AG04449 (cell line): ENCODE measurements at regions of chr1 and their contacts with region 1.

Region 1: DNA sequence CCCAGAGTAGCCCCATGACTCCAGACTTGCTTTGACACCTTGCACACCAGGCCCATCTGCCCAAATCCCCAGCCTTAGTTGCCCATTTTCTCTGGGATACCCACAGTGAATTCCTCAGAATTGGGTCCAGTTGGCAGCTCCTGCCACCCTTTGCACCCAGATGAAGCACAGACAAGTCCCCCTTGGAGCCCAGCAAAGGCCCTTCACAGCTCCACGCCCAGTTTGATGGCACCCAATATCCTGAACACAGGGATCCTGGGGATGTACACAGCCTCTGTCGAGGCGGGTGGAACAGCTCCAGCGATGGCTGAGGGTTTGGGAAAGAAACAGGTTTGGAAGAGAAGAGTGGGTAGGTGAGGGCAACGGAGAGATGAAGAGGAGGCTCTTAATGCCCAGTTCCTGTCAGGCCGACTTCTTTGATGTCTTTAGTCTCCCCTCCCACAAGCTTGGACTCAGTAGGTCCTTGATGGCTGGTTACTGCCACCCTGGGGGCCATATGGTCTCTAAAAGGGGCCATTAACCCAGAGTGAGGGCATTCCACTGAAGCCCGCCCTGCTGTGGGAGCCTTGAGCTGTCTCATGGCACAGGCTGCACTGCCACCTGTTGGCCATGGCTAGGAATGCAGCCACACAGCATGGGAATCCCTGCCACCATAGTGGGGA is 21.7 kb downstream of the TMEM53 start:
- DNase-seq: no peak
- H3K4me3 ChIP-seq: no peak overlapping the region
- CTCF ChIP-seq: peak; percentile 98

Region 2: GRCh38 chr1:44377925-44378784 is 274.4 kb before region 1 on chr1:
- CTCF ChIA-PET with region 1: interaction called, 67 read pairs
- POLR2A ChIA-PET with region 1: no interaction called
- DNase-seq: no peak
- H3K4me3 ChIP-seq: no peak overlapping the region
- CTCF ChIP-seq: peak; percentile 72

Region 3: DNA sequence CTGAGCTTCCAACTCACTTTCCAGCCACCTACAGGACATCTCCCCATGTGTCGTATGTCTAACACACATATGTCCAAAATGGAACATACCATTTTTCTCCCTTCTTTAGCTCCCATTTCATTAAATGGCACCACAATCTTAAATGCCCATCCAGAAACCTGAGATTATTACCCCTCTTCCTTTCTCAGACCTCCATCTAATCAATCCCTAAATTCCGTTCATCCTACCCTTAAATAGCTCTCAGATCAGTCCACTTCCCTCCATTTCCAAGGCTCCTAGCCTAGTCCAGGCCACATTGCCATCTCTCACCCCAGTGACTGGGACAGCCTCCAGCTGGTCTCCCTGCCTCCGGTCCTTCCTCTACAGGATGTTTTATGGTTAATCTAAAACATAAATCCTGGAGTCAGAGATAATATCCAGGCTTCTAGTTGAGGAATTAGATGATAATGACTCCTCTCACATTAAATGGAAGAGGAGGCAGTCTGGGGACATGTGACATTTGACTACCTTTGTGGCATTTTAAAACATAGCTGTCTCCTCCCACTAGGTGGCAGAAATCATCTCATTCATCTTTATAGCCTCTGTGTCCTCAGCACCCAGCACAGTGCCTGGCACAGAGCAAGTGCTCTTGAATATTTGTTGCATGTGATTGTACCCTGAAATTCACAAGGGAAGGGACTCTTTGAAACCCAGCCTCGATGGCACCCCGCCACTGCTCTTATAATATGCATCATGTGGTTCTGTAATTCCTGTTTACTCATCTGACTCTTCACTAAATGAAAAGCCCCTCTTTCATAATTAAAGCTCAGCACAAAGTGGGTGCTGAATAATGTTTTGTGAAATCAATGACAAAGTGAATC is 80.6 kb before region 1 on chr1:
- CTCF ChIA-PET with region 1: interaction called, 35 read pairs
- POLR2A ChIA-PET with region 1: no interaction called
- DNase-seq: no peak
- H3K4me3 ChIP-seq: no peak overlapping the region
- CTCF ChIP-seq: peak; percentile 24

Region 4: DNA sequence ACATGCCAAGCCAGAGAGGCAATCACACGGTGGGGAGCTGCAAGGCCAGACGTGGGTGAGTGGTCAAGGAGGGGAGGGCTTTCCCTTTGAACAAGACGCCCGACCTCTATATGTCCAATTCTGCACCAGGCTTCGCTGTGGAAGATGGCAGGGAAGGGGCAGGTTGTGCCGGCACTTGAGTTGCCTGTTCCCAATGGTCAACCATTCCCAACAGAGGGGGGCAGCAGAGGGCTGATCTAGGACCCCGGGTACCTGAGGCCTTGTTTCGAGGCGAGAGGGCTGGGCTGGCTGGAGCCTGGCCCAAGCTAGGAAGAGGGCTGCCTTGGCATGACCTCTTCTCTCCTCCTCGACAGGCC is 43.2 kb before region 1 on chr1:
- CTCF ChIA-PET with region 1: interaction called, 462 read pairs
- POLR2A ChIA-PET with region 1: interaction called, 3 read pairs
- DNase-seq: no peak
- H3K4me3 ChIP-seq: no peak overlapping the region
- CTCF ChIP-seq: peak; percentile 79

Region 5: DNA sequence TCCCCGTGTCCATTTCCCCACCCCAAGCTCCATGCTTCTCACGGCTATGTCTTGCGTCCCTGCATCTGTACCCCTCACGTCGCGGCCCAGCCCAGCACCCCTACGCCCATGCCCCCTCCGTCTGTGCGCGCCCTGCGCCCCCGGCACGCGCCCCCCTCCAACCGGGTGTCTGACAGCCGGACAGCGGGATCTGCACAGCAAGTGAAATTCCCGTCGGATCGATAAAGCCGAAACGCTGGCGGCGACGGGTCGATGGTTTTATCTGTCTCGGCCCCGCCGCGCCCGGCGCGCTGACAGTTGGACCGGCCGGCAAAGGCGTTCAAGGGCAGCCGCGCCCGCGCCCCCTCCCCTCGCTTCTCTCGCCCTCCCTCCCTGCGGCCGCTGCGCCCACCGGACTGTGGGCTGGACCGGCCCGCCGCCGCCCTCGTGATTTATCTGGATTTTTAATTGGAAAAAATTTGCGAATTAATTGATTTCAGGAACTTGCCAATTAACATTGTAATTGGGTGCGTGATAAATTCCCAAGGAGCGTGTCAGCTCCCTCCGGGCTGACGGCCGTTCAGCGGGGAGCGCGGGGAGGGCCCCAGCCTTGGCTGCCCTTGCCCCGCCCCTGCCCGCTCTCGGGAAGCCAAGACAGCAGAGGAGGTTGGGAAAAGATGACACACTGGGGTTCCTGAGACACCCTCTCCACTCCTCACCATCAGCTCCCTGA is 35.4 kb before region 1 on chr1:
- CTCF ChIA-PET with region 1: interaction called, 462 read pairs
- POLR2A ChIA-PET with region 1: no interaction called
- DNase-seq: no peak
- H3K4me3 ChIP-seq: peak overlapping the region; percentile 48
- CTCF ChIP-seq: no peak

Region 6: GRCh38 chr1:44631647-44632539 is 20.7 kb before region 1 on chr1:
- CTCF ChIA-PET with region 1: interaction called, 245 read pairs
- POLR2A ChIA-PET with region 1: interaction called, 4 read pairs
- DNase-seq: no peak
- H3K4me3 ChIP-seq: peak overlapping the region; percentile 72
- CTCF ChIP-seq: no peak

Region 7: GRCh38 chr1:44674113-44675000 is 21.8 kb after region 1 on chr1 and contains the starts of genes ARMH1 and TMEM53:
- CTCF ChIA-PET with region 1: interaction called, 44 read pairs
- POLR2A ChIA-PET with region 1: no interaction called
- DNase-seq: peak; percentile 88
- H3K4me3 ChIP-seq: peak within 1 kb of the TSS; percentile 90
- CTCF ChIP-seq: no peak

Region 8: GRCh38 chr1:44723496-44724295 is 71.1 kb after region 1 on chr1:
- CTCF ChIA-PET with region 1: no interaction called
- POLR2A ChIA-PET with region 1: no interaction called
- DNase-seq: no peak
- H3K4me3 ChIP-seq: no peak overlapping the region
- CTCF ChIP-seq: no peak

Region 9: GRCh38 chr1:44747878-44748277 is 95.3 kb after region 1 on chr1:
- CTCF ChIA-PET with region 1: no interaction called
- POLR2A ChIA-PET with region 1: no interaction called
- DNase-seq: no peak
- H3K4me3 ChIP-seq: no peak overlapping the region
- CTCF ChIP-seq: no peak